Ovary (tissue), 10 donors: ENCODE measurements at regions of chr1 and their contacts with region 1.

Region 1: GRCh38 chr1:14646973-14647372 is 48.5 kb downstream of the KAZN start:
- DNase-seq: no peak
- H3K4me3 ChIP-seq: no peak overlapping the region
- H3K27ac ChIP-seq: no peak overlapping the region
- H3K4me1 ChIP-seq: peaks cover 3% of the 10 kb centered on the region
- H3K27me3 ChIP-seq: no peaks in the 10 kb centered on the region
- CTCF ChIP-seq: no peak
- EP300 ChIP-seq: no peak
- POLR2A ChIP-seq: no peak

Region 2: GRCh38 chr1:14626869-14627607 is 19.9 kb before region 1 on chr1:
- intact Hi-C with region 1: loop called in 1 of 4 experiments (anchors 2 kb)
- DNase-seq: no peak
- H3K4me3 ChIP-seq: no peak overlapping the region
- H3K27ac ChIP-seq: no peak overlapping the region
- H3K4me1 ChIP-seq: peaks cover 1% of the 10 kb centered on the region
- H3K27me3 ChIP-seq: no peaks in the 10 kb centered on the region
- CTCF ChIP-seq: no peak
- EP300 ChIP-seq: no peak
- POLR2A ChIP-seq: no peak